Naive thymus-derived CD4-positive, alpha-beta T cell (primary cell): ENCODE measurements at regions of chr12 and their contacts with region 1.

Region 1: GRCh38 chr12:106309671-106310505 is 7.4 kb downstream of the TCP11L2 start:
- DNase-seq: no peak
- ATAC-seq: no peak
- H3K4me3 ChIP-seq: no peak overlapping the region
- H3K4me3 Mint-ChIP-seq: peak overlapping the region in 2 of 10 donors; percentile 2 to 49
- H3K27ac ChIP-seq: peak overlapping the region; percentile 12
- H3K27ac Mint-ChIP-seq: peak overlapping the region in 8 of 9 donors; percentile 6 to 83 (median 60)
- H3K4me1 ChIP-seq: peaks cover 2 to 31% of the 10 kb centered on the region in 2 donors
- H3K4me1 Mint-ChIP-seq: peaks cover 21 to 81% (median 67%) of the 10 kb centered on the region in 7 donors
- H3K27me3 ChIP-seq: no peaks in the 10 kb centered on the region
- H3K27me3 Mint-ChIP-seq: no peaks in the 10 kb centered on the region

Region 2: GRCh38 chr12:105721051-105721825 is 588.6 kb before region 1 on chr12:
- CTCF ChIA-PET with region 1: no interaction called
- POLR2A ChIA-PET with region 1: no interaction called
- intact Hi-C with region 1: no loop called
- DNase-seq: no peak
- ATAC-seq: no peak
- H3K4me3 ChIP-seq: no peak overlapping the region
- H3K4me3 Mint-ChIP-seq: no peak overlapping the region
- H3K27ac ChIP-seq: no peak overlapping the region
- H3K27ac Mint-ChIP-seq: no peak overlapping the region
- H3K4me1 ChIP-seq: no peaks in the 10 kb centered on the region
- H3K4me1 Mint-ChIP-seq: peaks cover 0 to 1% (median 0%) of the 10 kb centered on the region in 7 donors
- H3K27me3 ChIP-seq: no peaks in the 10 kb centered on the region
- H3K27me3 Mint-ChIP-seq: peaks cover 7 to 14% (median 11%) of the 10 kb centered on the region in 5 donors

Region 3: GRCh38 chr12:106329231-106329982 is 19.5 kb after region 1 on chr12:
- CTCF ChIA-PET with region 1: no interaction called
- POLR2A ChIA-PET with region 1: interaction called, 7 read pairs
- intact Hi-C with region 1: loop called in 1 of 2 experiments (anchors 2 kb)
- DNase-seq: no peak
- ATAC-seq: no peak
- H3K4me3 ChIP-seq: no peak overlapping the region
- H3K4me3 Mint-ChIP-seq: no peak overlapping the region
- H3K27ac ChIP-seq: no peak overlapping the region
- H3K27ac Mint-ChIP-seq: peak overlapping the region in 1 of 9 donors; percentile 22
- H3K4me1 ChIP-seq: no peaks in the 10 kb centered on the region
- H3K4me1 Mint-ChIP-seq: peaks cover 0 to 35% (median 18%) of the 10 kb centered on the region in 7 donors
- H3K27me3 ChIP-seq: no peaks in the 10 kb centered on the region
- H3K27me3 Mint-ChIP-seq: no peaks in the 10 kb centered on the region